Panc1 (cell line): ENCODE measurements at regions of chr3 and their contacts with region 1.

Region 1: DNA sequence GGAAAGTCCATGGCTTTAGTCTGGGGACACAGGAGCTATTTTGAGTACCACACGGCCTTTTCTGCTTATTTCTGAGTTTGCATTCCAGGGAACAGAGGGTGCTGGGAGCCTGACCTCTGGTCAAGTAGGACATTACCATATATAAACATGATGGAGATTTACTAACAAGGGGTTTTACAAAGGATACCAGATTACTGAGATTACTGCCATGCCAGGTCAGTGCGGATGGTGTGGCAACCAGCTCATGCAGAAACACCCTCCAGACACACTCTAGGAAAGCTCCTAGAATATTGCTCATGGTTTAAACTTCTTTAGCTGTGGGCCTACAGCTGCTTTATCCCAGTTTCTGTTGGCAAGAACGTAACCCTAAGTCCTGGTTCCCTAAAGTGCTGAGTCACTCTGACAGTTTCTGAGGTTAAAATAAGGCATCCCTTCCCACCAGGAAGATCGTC is 54.3 kb upstream of the AGTR1 start:
- DNase-seq: no peak
- ATAC-seq: no peak
- H3K4me3 ChIP-seq: no peak overlapping the region
- H3K27ac ChIP-seq: no peak overlapping the region
- H3K4me1 ChIP-seq: no peaks in the 10 kb centered on the region
- H3K27me3 ChIP-seq: no peaks in the 10 kb centered on the region; the same call in 1 of the 2 replicates
- CTCF ChIP-seq: no peak

Region 2: GRCh38 chr3:148657470-148657869 is 14.1 kb after region 1 on chr3:
- CTCF ChIA-PET with region 1: interaction called, 14 read pairs
- POLR2A ChIA-PET with region 1: no interaction called
- in situ Hi-C with region 1: no loop called
- intact Hi-C with region 1: no loop called
- DNase-seq: no peak
- ATAC-seq: no peak
- H3K4me3 ChIP-seq: no peak overlapping the region
- H3K27ac ChIP-seq: no peak overlapping the region
- H3K4me1 ChIP-seq: no peaks in the 10 kb centered on the region
- H3K27me3 ChIP-seq: peaks cover 2% of the 10 kb centered on the region; the same call in 1 of the 2 replicates
- CTCF ChIP-seq: no peak